ENCODE measurements at regions of chr17 and their contacts with region 1.

Region 1: DNA sequence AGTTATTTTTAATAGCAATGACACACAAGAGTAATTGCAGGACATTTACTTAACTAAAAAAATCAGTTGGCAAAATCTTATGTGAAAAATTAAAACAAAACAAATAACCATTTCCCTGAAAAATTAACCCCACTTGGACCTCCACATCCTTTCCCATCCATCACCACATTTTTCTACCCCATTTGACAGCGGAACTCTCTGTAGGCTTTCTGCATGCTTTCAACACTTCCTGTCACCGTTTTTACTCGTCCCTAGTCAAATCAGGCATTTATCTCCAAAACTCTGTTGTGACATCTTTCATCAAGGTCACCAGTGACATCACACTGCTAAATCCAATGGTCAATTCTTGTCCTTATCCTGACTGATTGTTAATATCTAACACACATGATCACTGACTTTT is 27.5 kb downstream of the KCNJ16 start:
- DNase-seq: no peak
- ATAC-seq: no peak
- H3K4me3 Mint-ChIP-seq: no peak overlapping the region
- H3K27ac Mint-ChIP-seq: no peak overlapping the region
- H3K4me1 Mint-ChIP-seq: peaks cover 4% of the 10 kb centered on the region
- H3K27me3 Mint-ChIP-seq: no peaks in the 10 kb centered on the region
- CTCF ChIP-seq: no peak

Region 2: DNA sequence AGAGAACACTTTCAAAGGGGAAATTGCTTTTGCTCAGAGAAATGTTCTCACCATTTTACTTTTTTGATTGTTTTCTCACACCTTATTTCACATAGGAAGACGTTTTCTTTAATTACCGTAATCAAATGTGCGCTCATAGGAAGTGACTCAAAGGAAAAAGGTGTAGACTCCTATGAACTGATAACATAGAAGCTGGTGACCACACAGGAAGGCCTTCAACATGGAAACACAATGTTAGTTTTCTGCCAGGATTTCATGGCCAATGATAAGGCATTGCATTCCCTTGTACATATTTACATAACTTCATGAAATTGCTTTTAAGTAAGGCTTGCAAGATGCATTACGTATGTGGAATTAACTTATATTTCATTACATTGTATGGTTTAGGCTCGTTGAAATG is 68.4 kb before region 1 on chr17:
- CTCF ChIA-PET with region 1: no interaction called
- POLR2A ChIA-PET with region 1: no interaction called
- intact Hi-C with region 1: no loop called
- DNase-seq: no peak
- ATAC-seq: no peak
- H3K4me3 Mint-ChIP-seq: no peak overlapping the region
- H3K27ac Mint-ChIP-seq: no peak overlapping the region
- H3K4me1 Mint-ChIP-seq: no peaks in the 10 kb centered on the region
- H3K27me3 Mint-ChIP-seq: no peaks in the 10 kb centered on the region
- CTCF ChIP-seq: no peak

Region 3: DNA sequence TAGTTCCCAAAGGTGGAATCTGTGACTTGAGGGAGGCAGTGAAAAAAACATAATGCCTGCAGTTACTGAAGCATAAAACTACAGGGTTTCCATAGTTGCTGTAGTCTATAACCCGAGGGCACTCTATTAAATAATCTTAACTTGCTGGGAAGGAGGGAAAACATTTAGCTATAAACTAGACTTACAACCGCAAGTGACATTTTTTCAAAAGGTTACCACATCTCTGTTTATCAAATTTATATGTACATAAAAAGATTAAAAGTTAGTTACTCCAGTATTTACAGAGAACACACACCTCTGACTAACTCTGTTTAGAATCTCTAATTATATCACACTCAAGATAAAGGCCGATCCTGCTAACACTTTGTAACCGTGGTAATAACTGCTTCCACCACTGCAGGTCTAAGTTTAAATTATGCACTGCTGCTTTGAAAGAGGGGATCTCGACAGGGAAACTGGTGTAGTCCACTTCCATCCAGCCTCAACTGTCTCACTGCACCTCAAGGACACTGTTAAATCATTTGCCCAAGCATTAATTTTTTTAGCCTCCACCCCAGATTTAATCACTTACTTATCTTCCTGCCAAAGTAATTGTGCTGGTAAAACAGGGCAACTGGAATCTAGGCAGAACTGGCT is 12.9 kb before region 1 on chr17:
- CTCF ChIA-PET with region 1: no interaction called
- POLR2A ChIA-PET with region 1: interaction called, 16 read pairs
- intact Hi-C with region 1: no loop called
- DNase-seq: no peak
- ATAC-seq: no peak
- H3K4me3 Mint-ChIP-seq: no peak overlapping the region
- H3K27ac Mint-ChIP-seq: no peak overlapping the region
- H3K4me1 Mint-ChIP-seq: no peaks in the 10 kb centered on the region
- H3K27me3 Mint-ChIP-seq: no peaks in the 10 kb centered on the region
- CTCF ChIP-seq: no peak

Measured in activated B cell treated with CpG ODN at 0.5 μM for 24 hours (primary cell).